H1 (cell line): ENCODE measurements at regions of chr7 and their contacts with region 1.

Region 1: GRCh38 chr7:78134256-78134655 is 335.7 kb downstream of the PHTF2 start:
- DNase-seq: no peak
- H3K4me3 ChIP-seq: no peak overlapping the region
- H3K27ac ChIP-seq: no peak overlapping the region
- H3K4me1 ChIP-seq: peaks cover 0 to 7% (median 0%) of the 10 kb centered on the region in 4 experiments; a peak in 3 of 7 replicates
- H3K27me3 ChIP-seq: no peaks in the 10 kb centered on the region
- CTCF ChIP-seq: peak in 2 of 3 experiments; percentile 53 to 61; a peak in 3 of 4 replicates
- EP300 ChIP-seq: no peak
- POLR2A ChIP-seq: no peak
- RAD21 ChIP-seq: peak; percentile 74 to 77

Region 2: DNA sequence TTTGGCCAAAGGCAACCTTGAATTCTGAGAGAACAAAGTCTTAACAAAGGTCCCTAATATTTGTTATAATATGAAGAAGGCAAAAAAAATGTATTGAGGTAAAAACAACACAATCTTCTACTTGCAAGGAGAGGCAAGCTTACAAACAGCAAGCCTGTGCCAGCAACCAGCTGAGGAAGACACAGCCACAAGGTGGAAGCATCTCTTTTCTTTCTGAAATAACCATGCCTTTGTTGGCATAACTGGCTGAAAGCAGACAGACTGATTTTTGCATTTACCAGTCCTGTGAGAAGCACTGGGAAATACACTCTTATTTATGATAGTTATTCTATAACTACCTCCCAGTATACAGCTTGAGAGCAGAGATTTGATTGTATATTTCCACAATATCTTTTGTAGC is 43.6 kb before region 1 on chr7:
- CTCF ChIA-PET with region 1: interaction called, 27 read pairs
- POLR2A ChIA-PET with region 1: no interaction called
- DNase-seq: no peak
- H3K4me3 ChIP-seq: no peak overlapping the region
- H3K27ac ChIP-seq: no peak overlapping the region
- H3K4me1 ChIP-seq: no peaks in the 10 kb centered on the region
- H3K27me3 ChIP-seq: no peaks in the 10 kb centered on the region
- CTCF ChIP-seq: peak in 1 of 3 experiments; percentile 39; a peak in 2 of 4 replicates
- EP300 ChIP-seq: no peak
- POLR2A ChIP-seq: no peak
- RAD21 ChIP-seq: peak; percentile 47 to 58

Region 3: DNA sequence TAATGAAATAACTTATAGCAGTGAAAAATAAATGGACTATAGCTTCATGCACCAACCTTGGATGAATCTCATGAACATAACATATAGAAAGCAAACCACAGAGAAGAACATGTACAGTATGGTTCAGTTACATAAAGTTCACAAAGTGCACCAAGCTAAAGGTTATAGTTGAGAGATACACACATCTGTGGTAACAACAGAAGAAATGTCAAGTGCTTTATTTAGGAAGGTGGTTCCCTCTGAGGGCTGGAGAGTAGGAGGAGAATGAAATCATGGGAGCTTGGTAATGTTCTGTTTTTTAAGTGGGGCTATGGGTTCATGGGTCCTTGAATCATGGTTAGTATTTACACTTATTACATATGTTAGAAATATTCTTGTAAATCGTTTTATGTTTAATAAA is 12.4 kb before region 1 on chr7:
- CTCF ChIA-PET with region 1: interaction called, 12 read pairs
- POLR2A ChIA-PET with region 1: no interaction called
- DNase-seq: no peak
- H3K4me3 ChIP-seq: no peak overlapping the region
- H3K27ac ChIP-seq: no peak overlapping the region
- H3K4me1 ChIP-seq: peaks cover 0 to 8% (median 0%) of the 10 kb centered on the region in 4 experiments; a peak in 1 of 7 replicates
- H3K27me3 ChIP-seq: no peaks in the 10 kb centered on the region
- CTCF ChIP-seq: no peak
- EP300 ChIP-seq: no peak
- POLR2A ChIP-seq: no peak
- RAD21 ChIP-seq: no peak

Region 4: DNA sequence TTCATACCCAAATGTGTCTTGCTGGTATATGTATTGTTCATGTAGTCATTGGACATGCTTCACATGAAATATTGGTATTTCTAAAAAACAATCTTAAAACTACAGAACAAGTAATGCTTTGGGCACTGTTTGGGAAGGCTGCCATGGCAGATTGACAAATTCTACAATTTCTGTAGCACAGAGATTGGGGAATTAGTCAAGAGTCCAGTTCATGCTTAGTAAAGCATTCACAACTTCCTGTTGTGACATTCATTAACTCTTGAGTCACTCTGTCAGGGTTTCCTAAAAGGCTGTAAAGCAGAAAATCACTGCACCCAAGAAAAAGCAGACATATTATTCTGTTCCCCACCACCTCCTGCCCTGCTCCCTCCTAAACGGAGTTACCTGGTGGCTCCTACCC is 63.2 kb after region 1 on chr7:
- CTCF ChIA-PET with region 1: interaction called, 11 read pairs
- POLR2A ChIA-PET with region 1: no interaction called
- DNase-seq: no peak
- H3K4me3 ChIP-seq: no peak overlapping the region
- H3K27ac ChIP-seq: no peak overlapping the region
- H3K4me1 ChIP-seq: no peaks in the 10 kb centered on the region
- H3K27me3 ChIP-seq: no peaks in the 10 kb centered on the region
- CTCF ChIP-seq: no peak
- EP300 ChIP-seq: no peak
- POLR2A ChIP-seq: no peak
- RAD21 ChIP-seq: no peak

Region 5: GRCh38 chr7:78226059-78226719 is 91.9 kb after region 1 on chr7:
- CTCF ChIA-PET with region 1: interaction called, 44 read pairs
- POLR2A ChIA-PET with region 1: no interaction called
- DNase-seq: peak; percentile 19 to 85
- H3K4me3 ChIP-seq: no peak overlapping the region
- H3K27ac ChIP-seq: no peak overlapping the region
- H3K4me1 ChIP-seq: no peaks in the 10 kb centered on the region
- H3K27me3 ChIP-seq: no peaks in the 10 kb centered on the region
- CTCF ChIP-seq: peak; percentile 58 to 72 (median 64)
- EP300 ChIP-seq: no peak
- POLR2A ChIP-seq: no peak
- RAD21 ChIP-seq: peak; percentile 82 to 84